ENCODE measurements at regions of chr5 and their contacts with region 1.

Region 1: DNA sequence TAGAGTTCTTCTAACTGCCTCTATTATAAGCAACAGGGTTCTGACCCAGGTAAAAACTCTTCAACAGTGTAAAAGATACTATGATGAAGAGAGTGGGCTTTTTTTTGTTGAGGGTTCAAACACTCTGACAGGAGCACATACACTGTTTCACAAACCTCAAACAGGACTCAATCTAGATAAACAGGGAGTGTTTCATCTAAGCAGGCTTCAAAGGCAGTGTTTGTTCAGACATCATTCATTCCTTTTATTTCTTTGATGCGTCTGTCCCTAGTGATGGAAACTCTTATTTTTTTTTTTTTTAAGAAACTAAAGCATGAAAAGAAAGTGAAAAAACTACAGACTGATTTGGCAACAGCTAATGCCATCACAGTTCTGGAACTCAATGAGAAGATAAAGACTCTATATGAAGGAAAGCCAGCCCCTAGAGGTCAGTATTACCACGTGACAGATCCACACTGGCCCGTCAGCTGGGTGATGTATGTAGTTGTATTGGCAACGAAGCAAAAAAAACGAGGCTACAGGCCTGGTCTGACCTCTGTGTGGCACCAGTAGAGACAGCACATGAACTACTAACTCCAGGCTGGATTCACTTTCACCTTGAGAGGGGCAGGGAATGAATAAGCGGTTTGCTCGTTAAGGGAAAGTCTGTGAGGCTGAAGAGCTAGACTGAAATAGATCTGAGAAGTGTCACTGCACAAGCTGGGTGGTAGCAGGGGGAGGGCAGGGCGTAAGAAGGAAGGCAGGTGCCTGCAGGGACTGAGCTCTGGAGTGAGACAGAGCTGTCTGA is 172.2 kb downstream of the CCDC192 start:
- DNase-seq: peak; percentile 67 to 84
- H3K4me3 ChIP-seq: no peak overlapping the region
- H3K27ac ChIP-seq: peak overlapping the region; percentile 23
- H3K4me1 ChIP-seq: peaks cover 27% of the 10 kb centered on the region
- H3K27me3 ChIP-seq: no peaks in the 10 kb centered on the region
- CTCF ChIP-seq: peak; percentile 49; the same call in 1 of the 2 replicates

Region 2: GRCh38 chr5:127564002-127564769 is 311.2 kb before region 1 on chr5:
- CTCF ChIA-PET with region 1: no interaction called
- POLR2A ChIA-PET with region 1: no interaction called
- intact Hi-C with region 1: loop called (anchors 5 kb)
- DNase-seq: peak; percentile 34 to 63
- H3K4me3 ChIP-seq: no peak overlapping the region
- H3K27ac ChIP-seq: no peak overlapping the region
- H3K4me1 ChIP-seq: no peaks in the 10 kb centered on the region
- H3K27me3 ChIP-seq: no peaks in the 10 kb centered on the region
- CTCF ChIP-seq: peak; percentile 79

Region 3: DNA sequence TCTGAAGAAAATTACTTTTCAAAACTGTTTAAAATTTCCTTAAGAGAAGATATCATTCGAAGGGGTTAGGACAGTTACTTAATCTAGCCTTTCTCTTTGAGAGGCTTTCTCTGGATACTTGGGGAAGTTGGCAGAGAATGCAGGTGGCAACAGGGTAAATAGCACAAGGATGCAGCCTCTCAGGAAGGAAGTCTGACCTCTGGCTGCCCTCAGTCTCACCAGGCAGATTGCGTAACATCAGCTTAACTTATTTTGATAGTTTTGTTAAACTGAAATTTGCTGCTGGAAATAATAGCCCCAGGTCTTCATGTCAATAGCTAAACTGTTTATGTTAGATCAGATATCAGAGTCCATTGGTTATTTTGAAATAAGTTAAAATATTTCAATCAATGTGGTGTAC is 151.9 kb before region 1 on chr5:
- CTCF ChIA-PET with region 1: no interaction called
- POLR2A ChIA-PET with region 1: no interaction called
- intact Hi-C with region 1: no loop called
- DNase-seq: peak in 1 of 2 experiments; percentile 76
- H3K4me3 ChIP-seq: no peak overlapping the region
- H3K27ac ChIP-seq: no peak overlapping the region
- H3K4me1 ChIP-seq: peaks cover 11% of the 10 kb centered on the region
- H3K27me3 ChIP-seq: no peaks in the 10 kb centered on the region
- CTCF ChIP-seq: no peak

Region 4: GRCh38 chr5:127916885-127917573 is 41.6 kb after region 1 on chr5:
- CTCF ChIA-PET with region 1: no interaction called
- POLR2A ChIA-PET with region 1: no interaction called
- intact Hi-C with region 1: no loop called
- DNase-seq: no peak
- H3K4me3 ChIP-seq: no peak overlapping the region
- H3K27ac ChIP-seq: no peak overlapping the region
- H3K4me1 ChIP-seq: no peaks in the 10 kb centered on the region
- H3K27me3 ChIP-seq: no peaks in the 10 kb centered on the region
- CTCF ChIP-seq: no peak

Region 5: DNA sequence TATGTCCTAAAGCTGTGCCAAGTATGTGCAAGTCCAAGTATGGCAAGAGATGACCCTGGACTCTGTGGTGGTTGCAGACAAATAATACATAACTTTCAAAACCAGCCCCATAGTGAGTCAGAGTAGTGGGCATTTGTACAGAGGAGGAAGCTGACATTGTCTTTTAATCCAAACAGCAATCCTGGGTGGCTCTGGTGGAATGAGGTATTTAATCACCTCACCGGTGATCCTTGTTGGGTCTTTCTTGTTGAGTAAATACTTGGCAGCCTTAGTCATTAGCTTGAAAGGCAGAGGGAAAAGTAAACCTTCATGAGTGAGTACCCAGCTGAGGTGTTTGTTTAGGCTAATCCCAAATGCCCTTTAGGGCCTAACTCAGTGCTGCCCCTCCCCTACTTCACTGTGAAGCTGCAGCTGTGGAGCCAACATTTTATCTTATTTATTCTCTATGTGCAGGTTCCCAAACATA is 59.4 kb after region 1 on chr5:
- CTCF ChIA-PET with region 1: no interaction called
- POLR2A ChIA-PET with region 1: no interaction called
- intact Hi-C with region 1: loop called (anchors 2 kb)
- DNase-seq: peak; percentile 76 to 100
- H3K4me3 ChIP-seq: no peak overlapping the region
- H3K27ac ChIP-seq: peak overlapping the region; percentile 78
- H3K4me1 ChIP-seq: peaks cover 54% of the 10 kb centered on the region
- H3K27me3 ChIP-seq: no peaks in the 10 kb centered on the region
- CTCF ChIP-seq: peak; percentile 51

Region 6: GRCh38 chr5:128038643-128039042 is 163.2 kb after region 1 on chr5:
- CTCF ChIA-PET with region 1: interaction called, 3 read pairs
- POLR2A ChIA-PET with region 1: no interaction called
- intact Hi-C with region 1: loop called (anchors 5 kb)
- DNase-seq: peak in 1 of 2 experiments; percentile 91
- H3K4me3 ChIP-seq: no peak overlapping the region
- H3K27ac ChIP-seq: peak overlapping the region; percentile 72
- H3K4me1 ChIP-seq: peaks cover 35% of the 10 kb centered on the region
- H3K27me3 ChIP-seq: no peaks in the 10 kb centered on the region
- CTCF ChIP-seq: no peak

Region 7: GRCh38 chr5:128074171-128074570 is 198.7 kb after region 1 on chr5:
- CTCF ChIA-PET with region 1: interaction called, 6 read pairs
- POLR2A ChIA-PET with region 1: interaction called, 29 read pairs
- intact Hi-C with region 1: no loop called
- DNase-seq: no peak
- H3K4me3 ChIP-seq: no peak overlapping the region
- H3K27ac ChIP-seq: no peak overlapping the region
- H3K4me1 ChIP-seq: peaks cover 9% of the 10 kb centered on the region
- H3K27me3 ChIP-seq: no peaks in the 10 kb centered on the region
- CTCF ChIP-seq: no peak

Region 8: DNA sequence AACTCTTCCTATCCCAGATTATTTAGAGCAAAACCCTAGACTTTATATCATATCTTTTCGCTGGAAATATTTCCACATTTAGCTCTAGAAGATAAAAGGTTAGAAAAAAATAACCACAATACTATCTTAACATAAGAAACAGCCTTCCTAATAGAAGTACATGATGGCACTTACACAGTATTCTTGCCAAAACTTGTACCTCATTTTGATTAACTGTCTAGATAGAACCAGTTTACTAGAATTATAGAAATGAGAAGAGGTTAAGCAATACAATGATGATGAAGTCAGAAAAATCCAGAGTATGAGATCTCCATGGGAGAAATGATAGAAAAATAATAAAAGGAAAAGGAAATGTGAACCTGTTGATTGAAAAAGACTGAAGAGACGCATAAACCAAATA is 271.2 kb after region 1 on chr5:
- CTCF ChIA-PET with region 1: no interaction called
- POLR2A ChIA-PET with region 1: no interaction called
- intact Hi-C with region 1: loop called (anchors 5 kb)
- DNase-seq: no peak
- H3K4me3 ChIP-seq: no peak overlapping the region
- H3K27ac ChIP-seq: no peak overlapping the region
- H3K4me1 ChIP-seq: no peaks in the 10 kb centered on the region
- H3K27me3 ChIP-seq: no peaks in the 10 kb centered on the region
- CTCF ChIP-seq: no peak

Region 9: DNA sequence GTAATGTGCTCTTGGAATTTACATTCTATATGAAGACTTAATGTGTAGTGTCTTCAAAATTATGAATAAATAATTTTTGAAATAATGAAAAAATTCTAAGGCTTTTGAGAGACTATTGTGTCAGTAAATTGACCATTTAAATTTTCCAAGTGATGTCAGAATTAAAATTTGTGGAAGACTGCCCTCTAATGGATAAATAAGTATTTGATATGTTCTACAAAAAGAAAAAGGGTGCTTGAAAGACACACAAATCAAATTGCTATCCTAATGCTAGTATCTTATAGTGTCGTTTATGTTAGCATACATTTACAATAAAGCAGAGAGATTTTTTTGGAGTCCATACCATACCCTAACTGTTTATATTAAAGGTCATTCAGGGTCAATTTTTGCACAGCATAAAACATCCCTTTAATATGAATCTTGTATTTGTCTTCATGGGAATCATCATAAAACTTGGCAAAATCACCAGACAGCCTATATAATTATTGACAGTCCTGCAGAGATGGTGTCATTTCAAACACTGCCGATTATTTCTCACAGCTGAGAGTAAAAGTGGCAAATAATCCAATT is 969.0 kb after region 1 on chr5:
- CTCF ChIA-PET with region 1: no interaction called
- POLR2A ChIA-PET with region 1: no interaction called
- intact Hi-C with region 1: loop called (anchors 2 kb)
- DNase-seq: no peak
- H3K4me3 ChIP-seq: no peak overlapping the region
- H3K27ac ChIP-seq: no peak overlapping the region
- H3K4me1 ChIP-seq: no peaks in the 10 kb centered on the region
- H3K27me3 ChIP-seq: no peaks in the 10 kb centered on the region
- CTCF ChIP-seq: peak; percentile 65; the same call in 1 of the 2 replicates

Measured in PC-9 (cell line).